ENCODE measurements at regions of chr7 and their contacts with region 1.

Region 1: DNA sequence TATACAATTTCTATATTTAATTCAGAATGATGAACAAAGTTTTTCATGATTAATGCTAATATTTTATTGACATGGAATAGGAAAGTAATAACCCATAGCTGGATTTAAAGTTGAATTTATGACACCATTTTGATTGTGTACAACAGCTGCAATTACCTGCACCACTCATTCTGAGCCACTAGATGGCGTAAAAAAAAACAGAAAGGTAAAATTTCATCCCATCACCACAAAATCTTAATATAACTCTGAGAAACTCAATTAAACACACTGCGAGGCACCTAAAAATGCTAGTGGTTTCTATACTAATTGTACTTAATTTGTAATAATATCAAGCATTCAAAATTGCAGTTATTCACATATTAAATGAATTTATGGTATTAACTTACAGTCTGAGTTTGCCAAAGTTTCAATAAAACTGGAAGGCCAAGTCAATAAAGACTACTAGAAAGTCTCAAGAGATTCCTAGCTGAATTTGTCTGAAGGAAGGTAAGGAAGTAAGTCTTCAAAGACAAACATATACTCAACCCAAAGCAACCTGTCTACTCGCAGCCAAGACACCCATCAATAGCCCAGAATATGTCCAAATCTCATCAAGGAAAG is 182.5 kb downstream of the SKAP2 start:
- DNase-seq: no peak
- H3K4me3 Mint-ChIP-seq: no peak overlapping the region
- H3K27ac Mint-ChIP-seq: no peak overlapping the region
- H3K4me1 Mint-ChIP-seq: no peaks in the 10 kb centered on the region
- H3K27me3 Mint-ChIP-seq: peaks cover 4% of the 10 kb centered on the region

Region 2: DNA sequence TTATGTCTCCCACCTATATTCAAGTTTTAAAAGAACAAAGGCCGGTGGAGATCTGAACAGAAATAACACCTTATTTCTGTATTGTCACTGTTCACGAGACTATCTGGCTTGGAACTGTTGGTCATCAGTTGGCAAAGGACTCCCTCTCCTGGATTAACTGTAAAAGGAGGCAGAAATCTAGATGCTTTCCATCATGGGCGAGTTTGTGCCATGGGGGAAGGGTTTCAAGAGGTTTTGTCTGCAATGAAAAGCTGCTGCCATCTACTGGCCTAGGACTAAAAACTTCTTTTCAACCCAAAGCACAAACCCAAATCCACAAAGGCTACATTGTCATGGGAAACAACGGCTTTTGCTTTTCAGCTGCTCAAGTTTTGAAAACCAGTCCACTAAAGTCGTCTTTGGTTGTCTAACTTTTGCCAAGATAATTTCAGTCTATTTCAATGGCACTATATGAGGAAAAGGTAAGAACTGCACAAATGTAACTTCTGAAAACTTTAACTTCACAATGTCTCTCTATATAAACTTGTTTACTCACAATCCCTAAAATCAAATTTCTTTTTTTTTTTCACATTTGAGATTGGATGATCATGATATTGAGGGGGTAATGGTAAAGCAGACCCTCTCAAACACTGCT is 14.3 kb before region 1 on chr7:
- CTCF ChIA-PET with region 1: interaction called, 11 read pairs
- POLR2A ChIA-PET with region 1: no interaction called
- DNase-seq: peak; percentile 66
- H3K4me3 Mint-ChIP-seq: no peak overlapping the region
- H3K27ac Mint-ChIP-seq: no peak overlapping the region
- H3K4me1 Mint-ChIP-seq: peaks cover 15% of the 10 kb centered on the region
- H3K27me3 Mint-ChIP-seq: peaks cover 26% of the 10 kb centered on the region

Region 3: GRCh38 chr7:27150568-27151340 is 468.8 kb after region 1 on chr7:
- CTCF ChIA-PET with region 1: interaction called, 12 read pairs
- POLR2A ChIA-PET with region 1: no interaction called
- DNase-seq: peak; percentile 63
- H3K4me3 Mint-ChIP-seq: peak overlapping the region; percentile 38
- H3K27ac Mint-ChIP-seq: peak overlapping the region; percentile 42
- H3K4me1 Mint-ChIP-seq: peaks cover 23% of the 10 kb centered on the region
- H3K27me3 Mint-ChIP-seq: peaks cover 89% of the 10 kb centered on the region

Measured in activated CD4-positive, alpha-beta memory T cell treated with anti-CD3 and anti-CD28 coated beads, Interleukin-2, amount 10 ng/mL, durations not matched to agents 7 days and 5 days (primary cell).